H1 (cell line): ENCODE measurements at regions of chr2 and their contacts with region 1.

Region 1: DNA sequence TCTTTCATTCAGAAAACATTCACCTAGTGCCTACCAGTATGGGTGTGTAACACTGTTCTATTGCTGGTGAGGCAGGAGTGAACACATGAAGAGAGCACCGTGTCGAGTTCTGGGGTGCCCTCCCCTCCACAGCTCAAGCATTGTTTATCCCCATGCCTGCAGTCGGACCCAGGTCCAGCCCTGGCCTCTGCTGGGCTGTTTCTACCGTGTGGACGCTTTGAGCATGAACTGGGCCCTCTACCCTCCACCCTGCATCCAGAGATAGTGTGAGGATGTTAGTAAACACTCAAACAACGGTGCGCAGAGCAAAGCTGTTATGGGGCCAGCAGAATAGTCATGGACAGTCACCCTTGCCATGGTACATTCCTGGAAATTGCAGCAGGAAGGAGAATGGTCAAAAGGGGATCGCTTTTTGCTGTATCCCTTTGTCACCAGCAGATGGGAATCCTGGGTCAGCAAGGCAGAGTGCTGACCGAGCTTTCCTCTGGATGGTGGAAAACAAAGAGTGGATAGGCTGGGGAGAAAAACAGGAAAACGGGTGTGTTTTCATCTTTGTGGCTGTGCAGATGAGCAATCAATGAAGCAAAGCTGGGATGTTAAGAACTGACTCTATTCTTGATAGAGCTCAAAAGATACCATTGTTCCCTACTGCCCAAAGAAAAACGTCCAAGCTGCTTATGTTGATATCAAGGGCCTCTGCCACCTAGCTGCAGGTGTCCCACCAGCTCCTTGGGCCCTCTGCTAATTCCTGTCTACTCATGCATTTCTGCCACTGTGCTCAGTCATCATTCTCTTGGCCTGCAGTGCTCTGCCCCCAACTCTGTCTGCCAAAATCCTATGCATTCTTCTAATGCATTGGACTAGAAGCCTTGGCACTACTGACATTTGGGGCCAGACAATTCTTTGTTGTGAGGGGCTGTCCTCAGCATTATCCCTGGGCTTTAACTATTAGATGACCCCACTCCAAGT is 38.7 kb downstream of the REEP1 start:
- DNase-seq: no peak
- H3K4me3 ChIP-seq: no peak overlapping the region
- H3K27ac ChIP-seq: no peak overlapping the region
- H3K4me1 ChIP-seq: no peaks in the 10 kb centered on the region
- H3K27me3 ChIP-seq: no peaks in the 10 kb centered on the region
- CTCF ChIP-seq: peak; percentile 44 to 58 (median 57)
- EP300 ChIP-seq: no peak
- POLR2A ChIP-seq: no peak
- RAD21 ChIP-seq: peak; percentile 69 to 72

Region 2: GRCh38 chr2:86283411-86284030 is 15.2 kb before region 1 on chr2:
- CTCF ChIA-PET with region 1: interaction called, 12 read pairs
- POLR2A ChIA-PET with region 1: no interaction called
- DNase-seq: no peak
- H3K4me3 ChIP-seq: no peak overlapping the region
- H3K27ac ChIP-seq: no peak overlapping the region
- H3K4me1 ChIP-seq: no peaks in the 10 kb centered on the region
- H3K27me3 ChIP-seq: no peaks in the 10 kb centered on the region
- CTCF ChIP-seq: no peak
- EP300 ChIP-seq: no peak
- POLR2A ChIP-seq: no peak
- RAD21 ChIP-seq: no peak

Region 3: GRCh38 chr2:86314125-86314524 is 15.4 kb after region 1 on chr2:
- CTCF ChIA-PET with region 1: interaction called, 31 read pairs
- POLR2A ChIA-PET with region 1: no interaction called
- DNase-seq: no peak
- H3K4me3 ChIP-seq: no peak overlapping the region
- H3K27ac ChIP-seq: no peak overlapping the region
- H3K4me1 ChIP-seq: no peaks in the 10 kb centered on the region
- H3K27me3 ChIP-seq: no peaks in the 10 kb centered on the region
- CTCF ChIP-seq: no peak
- EP300 ChIP-seq: no peak
- POLR2A ChIP-seq: no peak
- RAD21 ChIP-seq: no peak

Region 4: DNA sequence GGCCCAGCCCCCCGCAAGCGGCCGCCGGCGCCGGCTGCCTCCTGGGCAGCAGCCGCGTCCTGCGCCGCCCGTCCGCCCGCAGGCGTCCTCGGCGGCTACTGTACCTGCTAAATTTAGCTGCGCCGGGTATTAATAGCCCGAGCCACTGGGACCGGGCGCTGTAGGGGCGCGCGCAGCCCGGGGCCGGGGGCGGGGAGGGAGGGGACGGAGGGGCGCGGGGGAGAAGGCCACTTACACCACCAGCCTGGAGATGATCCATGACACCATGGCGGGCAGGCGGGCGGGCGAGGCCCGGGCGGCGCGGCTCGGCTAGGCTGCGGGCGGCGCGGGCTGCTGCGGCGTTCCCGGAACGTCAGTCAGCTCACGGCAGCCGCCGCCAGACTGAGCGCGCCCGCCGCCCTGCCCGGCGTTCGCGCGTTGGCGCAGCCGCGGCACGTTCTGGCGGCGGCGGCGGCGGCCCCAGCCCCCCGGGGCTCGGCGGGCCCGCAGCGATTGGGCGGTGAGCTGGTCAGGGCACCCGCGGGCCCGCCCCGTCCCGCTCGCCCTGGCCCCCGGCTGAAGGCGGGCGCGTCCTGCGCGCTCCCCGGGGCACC is 38.6 kb after region 1 on chr2 and contains the start of gene REEP1:
- CTCF ChIA-PET with region 1: interaction called, 12 read pairs
- POLR2A ChIA-PET with region 1: no interaction called
- DNase-seq: no peak
- H3K4me3 ChIP-seq: peak within 1 kb of the TSS; percentile 43 to 68 (median 52)
- H3K27ac ChIP-seq: no peak within 1 kb of the TSS
- H3K4me1 ChIP-seq: peaks cover 0 to 3% (median 3%) of the 10 kb centered on the region in 4 experiments; a peak in 5 of 7 replicates
- H3K27me3 ChIP-seq: peaks cover 22 to 55% (median 46%) of the 10 kb centered on the region in 4 experiments
- CTCF ChIP-seq: no peak
- EP300 ChIP-seq: no peak
- POLR2A ChIP-seq: no peak
- RAD21 ChIP-seq: no peak
- total RNA-seq, gene REEP1: 1.5 TPM in 2 replicates